Posterior vena cava (tissue), 2 donors: ENCODE measurements at regions of chr4 and their contacts with region 1.

Region 1: DNA sequence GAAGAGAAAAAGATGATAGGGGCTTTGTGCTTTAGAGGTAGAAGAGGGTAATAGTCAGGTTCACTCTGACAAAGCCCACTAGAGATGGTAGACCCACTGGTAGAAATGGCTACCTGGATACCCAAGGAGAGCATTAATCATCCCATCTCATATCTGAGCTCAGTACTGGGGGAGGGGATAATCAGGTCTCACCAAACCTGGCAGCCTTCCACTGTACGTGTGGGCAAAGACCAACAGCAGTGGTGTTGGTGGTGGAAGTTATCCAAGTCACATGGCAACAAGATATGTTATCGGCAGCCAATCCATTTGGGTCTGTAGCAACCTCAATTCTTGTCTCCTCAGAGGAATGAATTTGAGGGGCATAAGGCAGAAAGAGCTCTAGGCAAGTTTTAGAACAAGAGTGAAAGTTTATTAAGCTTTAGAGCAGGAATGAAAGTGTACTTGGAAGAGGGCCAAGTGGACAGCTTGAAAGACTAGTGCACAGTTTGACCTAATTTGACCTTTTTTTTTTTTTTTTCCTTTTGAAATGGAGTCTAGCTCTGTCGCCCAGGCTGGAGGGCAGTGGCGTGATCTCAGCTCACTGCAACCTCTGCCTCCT is 67.0 kb upstream of the CXCL13 start:
- DNase-seq: no peak

Region 2: DNA sequence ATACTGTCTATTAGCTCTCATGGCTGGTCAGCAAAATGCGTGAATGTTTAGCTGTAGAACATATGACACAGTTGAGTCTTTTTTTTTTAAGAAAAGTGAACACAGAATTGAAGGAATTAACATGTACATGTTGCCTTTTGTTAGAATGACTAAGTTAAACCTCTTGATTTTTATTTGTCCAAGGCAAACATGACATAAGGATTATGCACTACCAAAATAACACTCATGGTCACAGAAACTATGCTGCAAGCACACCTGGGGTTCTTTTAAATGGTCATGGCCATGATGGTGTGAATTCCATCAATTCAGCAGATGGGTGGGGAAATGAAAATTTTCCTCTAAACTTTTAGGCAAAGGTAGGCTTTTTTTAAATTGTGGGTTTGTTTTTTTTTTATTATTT is 13.1 kb before region 1 on chr4:
- intact Hi-C with region 1: no loop called
- DNase-seq: no peak

Region 3: GRCh38 chr4:77586951-77587383 is 48.3 kb after region 1 on chr4:
- intact Hi-C with region 1: no loop called
- DNase-seq: no peak

Region 4: DNA sequence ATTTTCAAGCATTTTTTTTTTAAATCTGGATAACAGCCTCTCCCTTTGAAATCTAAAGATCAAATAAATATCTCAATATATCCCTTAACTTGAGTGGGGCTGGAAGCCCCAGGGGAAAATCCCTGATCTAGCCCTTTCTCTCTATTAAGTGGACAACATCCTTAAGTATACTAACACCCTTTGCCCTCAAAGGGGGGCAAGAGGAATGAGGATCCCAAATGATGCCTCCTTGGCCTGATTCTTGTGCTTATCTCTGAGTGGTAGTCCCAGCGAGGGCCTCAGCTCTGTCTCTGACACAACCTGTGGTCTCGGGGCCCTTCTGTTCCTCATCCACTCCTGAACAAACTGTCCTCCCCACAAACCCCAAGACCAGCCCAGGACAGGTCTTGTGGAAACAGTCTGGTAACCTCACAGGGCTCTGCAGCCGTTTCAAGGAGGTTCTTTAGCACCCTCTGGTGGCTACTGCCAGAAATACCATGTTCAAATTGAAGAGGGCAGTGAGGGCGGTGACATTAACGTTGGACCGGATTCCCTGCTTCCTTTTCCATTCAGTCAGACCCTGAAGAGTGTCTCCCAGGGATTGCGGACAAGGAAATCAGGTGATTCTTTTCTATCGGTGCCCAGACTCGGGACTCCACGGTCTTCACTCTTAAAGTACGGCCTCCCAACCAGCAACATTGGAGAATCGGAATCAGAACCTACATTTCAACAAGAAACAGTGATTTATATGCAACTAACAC is 79.9 kb after region 1 on chr4:
- intact Hi-C with region 1: loop called in 1 of 2 experiments (anchors 5 kb)
- DNase-seq: no peak